ENCODE measurements at regions of chr12 and their contacts with region 1.

Region 1: GRCh38 chr12:53757095-53757770 is 5.5 kb upstream of the CISTR start:
- DNase-seq: peak; percentile 70 to 99
- H3K4me3 ChIP-seq: peak overlapping the region; percentile 19 to 52 (median 42); a peak in 6 of 8 replicates
- H3K27ac ChIP-seq: no peak overlapping the region
- H3K4me1 ChIP-seq: peaks cover 3 to 17% (median 7%) of the 10 kb centered on the region in 4 experiments
- H3K27me3 ChIP-seq: peaks cover 17 to 38% (median 33%) of the 10 kb centered on the region in 4 experiments
- CTCF ChIP-seq: peak; percentile 85 to 93 (median 92)
- EP300 ChIP-seq: no peak
- POLR2A ChIP-seq: no peak
- RAD21 ChIP-seq: peak; percentile 56 to 73

Region 2: DNA sequence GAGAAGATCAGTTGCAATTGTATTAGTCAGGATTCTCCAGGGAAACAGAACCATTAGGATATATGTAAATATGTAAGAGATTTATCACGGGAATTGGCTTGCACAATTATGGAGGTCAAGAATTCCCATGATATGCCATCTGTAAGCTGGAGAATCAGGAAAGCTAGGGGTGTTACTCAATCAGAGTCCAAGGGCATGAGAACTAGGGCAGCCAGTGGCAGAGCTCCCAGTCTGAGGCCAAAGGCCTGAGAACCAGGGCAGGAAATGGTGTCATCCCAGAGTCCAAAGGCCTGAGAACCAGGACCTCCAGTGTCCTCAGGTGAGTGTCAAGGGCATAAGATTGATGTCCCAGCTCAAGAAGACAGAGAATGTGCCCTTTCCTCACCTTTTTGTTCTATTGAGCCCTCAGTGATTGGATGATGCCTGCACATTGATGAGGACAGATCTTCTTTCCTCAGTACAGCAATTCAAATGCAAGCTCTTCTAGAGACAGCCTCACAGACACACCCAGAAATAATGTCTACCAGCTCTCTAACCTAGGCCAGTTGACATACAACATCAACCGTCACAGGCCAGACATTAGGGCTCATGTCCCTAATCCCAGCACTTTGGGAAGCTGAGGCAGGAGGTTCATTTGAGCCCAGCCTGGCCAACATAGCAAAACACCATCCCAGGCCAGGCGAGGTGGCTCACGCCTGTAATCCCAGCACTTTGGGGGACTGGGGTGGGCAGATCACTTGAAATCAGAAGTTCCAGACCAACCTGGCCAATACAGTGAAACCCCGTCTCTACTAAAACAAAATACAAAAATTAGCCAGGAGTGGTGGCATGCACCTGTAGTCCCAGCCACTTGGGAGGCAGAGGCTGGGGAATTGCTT is 611.6 kb before region 1 on chr12:
- CTCF ChIA-PET with region 1: no interaction called
- POLR2A ChIA-PET with region 1: no interaction called
- DNase-seq: no peak
- H3K4me3 ChIP-seq: no peak overlapping the region
- H3K27ac ChIP-seq: no peak overlapping the region
- H3K4me1 ChIP-seq: peaks cover 0 to 2% (median 0%) of the 10 kb centered on the region in 4 experiments; a peak in 2 of 7 replicates
- H3K27me3 ChIP-seq: no peaks in the 10 kb centered on the region
- CTCF ChIP-seq: no peak
- EP300 ChIP-seq: no peak
- POLR2A ChIP-seq: no peak
- RAD21 ChIP-seq: no peak

Region 3: GRCh38 chr12:53579545-53579955 is 177.7 kb before region 1 on chr12:
- CTCF ChIA-PET with region 1: no interaction called
- POLR2A ChIA-PET with region 1: no interaction called
- DNase-seq: no peak
- H3K4me3 ChIP-seq: no peak overlapping the region
- H3K27ac ChIP-seq: no peak overlapping the region
- H3K4me1 ChIP-seq: no peaks in the 10 kb centered on the region
- H3K27me3 ChIP-seq: no peaks in the 10 kb centered on the region
- CTCF ChIP-seq: no peak
- EP300 ChIP-seq: no peak
- POLR2A ChIP-seq: no peak
- RAD21 ChIP-seq: no peak

Region 4: DNA sequence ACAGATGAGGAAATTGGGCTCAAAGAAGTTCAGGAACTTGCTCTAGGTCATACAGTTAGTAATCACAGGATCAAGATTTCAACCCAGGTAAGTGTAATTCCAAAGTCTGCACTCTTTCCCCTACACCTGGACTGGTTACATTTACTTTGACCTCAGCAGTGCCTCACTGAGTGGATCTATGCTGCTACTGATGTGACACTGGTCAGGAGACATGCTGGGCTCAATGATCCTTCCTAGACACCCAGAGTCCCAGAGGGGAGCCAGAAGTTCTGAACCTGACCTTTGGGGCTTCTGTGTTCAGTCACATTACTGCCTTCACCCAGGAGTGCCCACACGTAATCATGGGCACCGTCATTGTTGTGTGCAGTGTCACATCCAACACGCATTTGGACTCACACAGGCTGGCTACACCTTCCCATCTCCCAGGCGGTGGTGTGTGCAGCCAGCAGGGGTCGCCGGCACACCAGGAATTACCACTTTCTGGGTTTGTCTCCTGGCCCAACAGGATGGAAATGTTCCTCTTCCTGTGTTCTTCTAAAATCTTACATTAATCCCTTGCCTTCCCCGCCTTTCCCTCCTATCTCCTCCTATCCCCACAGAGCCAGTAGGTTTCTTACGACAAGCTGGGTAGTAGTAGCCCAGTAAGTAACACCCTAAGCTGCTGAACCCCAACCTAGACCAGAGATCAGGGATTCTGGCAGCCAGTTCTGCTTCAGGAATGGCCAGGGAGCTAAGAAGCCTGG is 55.5 kb before region 1 on chr12:
- CTCF ChIA-PET with region 1: interaction called, 26 read pairs
- POLR2A ChIA-PET with region 1: interaction called, 4 read pairs
- DNase-seq: peak in 1 of 2 experiments; percentile 91
- H3K4me3 ChIP-seq: no peak overlapping the region
- H3K27ac ChIP-seq: no peak overlapping the region
- H3K4me1 ChIP-seq: peaks cover 0 to 7% (median under 1%) of the 10 kb centered on the region in 4 experiments; a peak in 4 of 7 replicates
- H3K27me3 ChIP-seq: peaks cover 8 to 18% (median 16%) of the 10 kb centered on the region in 4 experiments
- CTCF ChIP-seq: peak; percentile 97 to 100 (median 98)
- EP300 ChIP-seq: no peak
- POLR2A ChIP-seq: no peak
- RAD21 ChIP-seq: peak; percentile 96 to 99

Region 5: DNA sequence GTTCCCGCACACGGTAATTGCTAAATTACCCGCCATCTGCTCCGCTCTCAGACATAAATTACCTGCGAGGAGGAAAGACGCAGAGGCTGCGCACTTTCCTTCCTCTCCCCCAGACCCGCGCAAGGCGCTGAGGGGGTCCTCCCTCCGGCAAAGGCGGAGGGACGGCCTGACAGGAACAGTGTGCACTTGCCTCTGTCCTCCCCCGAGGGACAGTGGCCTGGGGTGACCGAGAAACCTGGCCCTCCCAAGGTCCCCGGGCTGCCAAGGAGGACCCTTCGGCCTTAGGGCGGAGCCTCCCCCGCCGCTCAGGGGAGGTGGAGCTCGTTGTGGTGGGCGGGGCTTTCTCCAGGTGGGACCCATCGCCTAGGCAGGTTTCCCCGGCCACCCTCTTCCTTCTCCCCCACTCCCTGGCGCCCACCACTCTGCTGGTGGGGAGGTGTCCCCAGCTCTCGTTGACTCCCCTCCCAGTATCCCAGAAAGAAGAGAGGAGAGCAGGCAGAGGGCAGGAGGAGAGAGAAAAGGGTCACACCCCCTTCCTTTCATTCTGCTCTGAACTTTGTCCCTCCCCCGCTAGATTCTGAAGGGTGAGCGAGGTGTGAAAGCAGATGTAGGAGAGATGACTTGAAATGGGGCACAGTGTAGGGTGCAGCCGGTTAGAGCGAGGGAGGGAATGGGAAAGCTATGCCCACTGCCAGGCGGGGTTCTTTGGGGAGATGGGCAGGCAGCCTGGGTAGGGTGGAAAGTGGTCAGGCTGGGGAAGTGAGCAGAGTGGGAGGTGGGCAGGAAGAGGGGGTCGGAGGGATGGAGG is 18.6 kb before region 1 on chr12:
- CTCF ChIA-PET with region 1: interaction called, 152 read pairs
- POLR2A ChIA-PET with region 1: interaction called, 6 read pairs
- DNase-seq: peak in 1 of 2 experiments; percentile 92
- H3K4me3 ChIP-seq: peak overlapping the region; percentile 58 to 74 (median 65)
- H3K27ac ChIP-seq: no peak overlapping the region
- H3K4me1 ChIP-seq: peaks cover 0 to 13% (median 7%) of the 10 kb centered on the region in 4 experiments; a peak in 5 of 7 replicates
- H3K27me3 ChIP-seq: peaks cover 30 to 67% (median 54%) of the 10 kb centered on the region in 4 experiments
- CTCF ChIP-seq: no peak
- EP300 ChIP-seq: no peak
- POLR2A ChIP-seq: no peak
- RAD21 ChIP-seq: no peak

Region 6: GRCh38 chr12:53781228-53781801 is 24.1 kb after region 1 on chr12:
- CTCF ChIA-PET with region 1: interaction called, 27 read pairs
- POLR2A ChIA-PET with region 1: interaction called, 3 read pairs
- DNase-seq: no peak
- H3K4me3 ChIP-seq: no peak overlapping the region
- H3K27ac ChIP-seq: no peak overlapping the region
- H3K4me1 ChIP-seq: peaks cover 0 to 5% (median under 1%) of the 10 kb centered on the region in 4 experiments; a peak in 2 of 7 replicates
- H3K27me3 ChIP-seq: peaks cover 0 to 2% (median 0%) of the 10 kb centered on the region in 4 experiments; a peak in 3 of 7 replicates
- CTCF ChIP-seq: no peak
- EP300 ChIP-seq: no peak
- POLR2A ChIP-seq: no peak
- RAD21 ChIP-seq: no peak

Region 7: GRCh38 chr12:53938326-53939140 is 181.3 kb after region 1 on chr12 and contains the start of gene HOXC13:
- CTCF ChIA-PET with region 1: interaction called, 17 read pairs
- POLR2A ChIA-PET with region 1: no interaction called
- DNase-seq: peak; percentile 92 to 97
- H3K4me3 ChIP-seq: peak within 1 kb of the TSS in 1 of 4 experiments; percentile 48; a peak in 3 of 8 replicates
- H3K27ac ChIP-seq: no peak within 1 kb of the TSS
- H3K4me1 ChIP-seq: peaks cover 0 to 6% (median 5%) of the 10 kb centered on the region in 4 experiments; a peak in 4 of 7 replicates
- H3K27me3 ChIP-seq: peaks cover 90 to 100% (median 97%) of the 10 kb centered on the region in 4 experiments
- CTCF ChIP-seq: no peak
- EP300 ChIP-seq: no peak; a peak in 1 of 3 replicates
- POLR2A ChIP-seq: no peak
- RAD21 ChIP-seq: no peak
- total RNA-seq, gene HOXC13: 0.13 TPM in 1 of 2 replicates, not detected in the other

Region 8: GRCh38 chr12:53944907-53945847 is 187.9 kb after region 1 on chr12:
- CTCF ChIA-PET with region 1: interaction called, 10 read pairs
- POLR2A ChIA-PET with region 1: no interaction called
- DNase-seq: peak in 1 of 2 experiments; percentile 59
- H3K4me3 ChIP-seq: no peak overlapping the region
- H3K27ac ChIP-seq: no peak overlapping the region
- H3K4me1 ChIP-seq: peaks cover 0 to 7% (median under 1%) of the 10 kb centered on the region in 4 experiments; a peak in 5 of 7 replicates
- H3K27me3 ChIP-seq: peaks cover 93 to 100% (median 98%) of the 10 kb centered on the region in 4 experiments
- CTCF ChIP-seq: peak in 2 of 3 experiments; percentile 30 to 32; a peak in 2 of 4 replicates
- EP300 ChIP-seq: no peak
- POLR2A ChIP-seq: no peak
- RAD21 ChIP-seq: peak in 1 of 2 experiments; percentile 18; a peak in 1 of 4 replicates

Region 9: GRCh38 chr12:53961025-53961761 is 204.0 kb after region 1 on chr12:
- CTCF ChIA-PET with region 1: interaction called, 10 read pairs
- POLR2A ChIA-PET with region 1: no interaction called
- DNase-seq: no peak
- H3K4me3 ChIP-seq: peak overlapping the region in 1 of 4 experiments; percentile 30; a peak in 1 of 8 replicates
- H3K27ac ChIP-seq: no peak overlapping the region
- H3K4me1 ChIP-seq: peaks cover 0 to 4% (median under 1%) of the 10 kb centered on the region in 4 experiments; a peak in 1 of 7 replicates
- H3K27me3 ChIP-seq: peaks cover 99 to 100% (median 100%) of the 10 kb centered on the region in 4 experiments
- CTCF ChIP-seq: peak in 2 of 3 experiments; percentile 23 to 27; a peak in 3 of 4 replicates
- EP300 ChIP-seq: no peak
- POLR2A ChIP-seq: no peak
- RAD21 ChIP-seq: peak; percentile 18 to 24; a peak in 2 of 4 replicates

Region 10: DNA sequence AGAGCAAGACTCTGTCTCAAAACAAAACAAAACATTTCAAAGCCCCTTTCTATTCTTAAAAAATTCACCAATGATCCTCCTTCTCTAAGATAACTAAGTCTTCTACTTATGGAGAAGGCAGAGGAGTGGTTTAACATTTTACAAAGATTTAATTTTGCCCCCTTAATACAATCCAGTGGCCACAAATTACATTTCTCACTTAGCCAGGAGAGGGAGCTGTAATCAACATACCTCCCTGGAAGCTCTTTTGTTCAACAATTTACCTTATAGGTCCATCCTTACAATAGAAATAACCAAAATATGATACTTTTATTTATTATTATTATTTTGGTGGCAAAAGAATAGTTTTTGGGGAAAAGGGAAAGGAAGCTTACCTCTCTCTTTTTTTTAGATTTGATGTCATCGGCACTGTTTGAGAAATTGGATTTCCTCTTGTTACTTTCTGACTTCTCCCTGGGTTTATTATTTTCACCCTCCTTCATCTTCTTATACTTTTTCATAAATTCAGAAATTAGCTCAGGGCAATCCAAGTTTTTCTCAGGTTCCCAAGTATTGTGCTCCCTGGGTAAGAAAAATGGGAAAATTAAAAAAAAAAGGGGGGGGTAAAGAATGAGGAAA is 494.5 kb after region 1 on chr12:
- CTCF ChIA-PET with region 1: no interaction called
- POLR2A ChIA-PET with region 1: no interaction called
- DNase-seq: no peak
- H3K4me3 ChIP-seq: no peak overlapping the region
- H3K27ac ChIP-seq: no peak overlapping the region
- H3K4me1 ChIP-seq: no peaks in the 10 kb centered on the region
- H3K27me3 ChIP-seq: no peaks in the 10 kb centered on the region
- CTCF ChIP-seq: peak in 2 of 3 experiments; percentile 41 to 55; a peak in 2 of 4 replicates
- EP300 ChIP-seq: no peak
- POLR2A ChIP-seq: no peak
- RAD21 ChIP-seq: peak; percentile 56 to 62